Motor neuron (in vitro differentiated cells): ENCODE measurements at regions of chr10 and their contacts with region 1.

Region 1: DNA sequence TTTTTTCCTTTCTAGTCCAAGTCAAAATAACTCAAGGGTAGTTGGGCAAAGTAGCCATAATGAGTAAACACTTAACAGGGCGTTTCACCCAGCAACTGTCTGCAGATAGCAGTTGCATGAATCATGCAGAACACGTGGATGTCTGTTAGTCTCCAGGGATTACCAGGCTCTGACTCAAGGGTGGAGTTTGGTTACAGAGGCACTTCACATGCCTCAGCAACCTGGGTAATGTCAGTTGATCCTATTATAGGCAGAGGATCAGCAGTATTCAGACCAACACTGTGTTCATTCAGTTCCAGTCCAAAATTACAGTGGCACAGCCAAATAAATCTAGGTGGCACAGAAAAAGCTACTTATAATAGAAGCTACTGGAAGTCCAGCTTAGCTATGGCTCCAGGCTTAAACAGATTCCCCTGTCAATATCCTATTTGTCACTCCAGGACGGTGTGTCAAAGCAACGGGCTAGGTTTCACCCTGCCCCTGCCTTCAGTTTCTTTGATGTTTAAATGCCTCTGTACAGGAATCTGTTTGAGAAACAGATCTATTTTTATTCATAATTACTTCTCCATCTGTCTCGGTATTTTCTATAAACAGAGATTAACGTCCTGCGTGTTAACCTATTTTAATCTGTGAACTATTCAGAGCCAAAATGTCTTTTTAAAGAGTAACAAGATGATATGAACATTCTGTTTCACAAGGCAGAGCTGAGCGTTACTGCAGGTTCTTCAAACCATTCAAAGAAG is 162.7 kb upstream of the AKR1E2 start:
- ATAC-seq: peak; percentile 94 to 100 (median 98)
- H3K4me3 ChIP-seq: no peak overlapping the region
- H3K27ac ChIP-seq: no peak overlapping the region
- H3K4me1 ChIP-seq: peaks cover 13 to 19% of the 10 kb centered on the region in 2 donors

Region 2: DNA sequence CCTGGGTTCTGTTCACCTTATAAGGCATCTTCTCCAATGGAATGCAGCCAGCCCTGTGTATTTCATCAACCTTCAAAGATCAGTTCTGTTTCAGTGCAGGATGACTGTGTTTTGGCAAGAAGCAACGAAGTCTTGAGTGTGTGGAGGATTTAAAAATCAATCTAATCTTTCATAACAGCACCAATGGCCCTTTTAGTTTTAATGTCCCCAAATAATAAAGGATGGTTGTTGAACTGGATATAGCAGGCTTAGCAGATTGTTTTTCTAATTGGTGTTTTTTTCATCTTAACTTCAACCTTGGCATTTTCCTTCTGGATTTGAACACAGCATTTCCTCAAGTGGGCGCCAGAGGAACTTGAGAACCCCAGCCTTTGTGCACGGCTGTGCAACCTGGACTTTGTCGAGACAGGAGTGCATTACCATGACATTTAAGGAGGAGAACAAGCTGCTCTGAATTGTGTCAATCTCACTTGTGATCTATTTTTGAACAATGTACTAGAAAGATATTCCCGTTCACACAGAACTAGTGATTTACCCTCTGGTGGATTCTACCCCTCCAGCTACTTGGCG is 150.6 kb before region 1 on chr10:
- in situ Hi-C with region 1: loop called in 1 of 9 experiments (anchors 10 kb)
- ATAC-seq: peak in 4 of 8 experiments; percentile 31 to 86 (median 76)
- H3K4me3 ChIP-seq: no peak overlapping the region
- H3K27ac ChIP-seq: no peak overlapping the region
- H3K4me1 ChIP-seq: no peaks in the 10 kb centered on the region